ENCODE measurements at regions of chr17 and their contacts with region 1.

Region 1: GRCh38 chr17:4444782-4445473 is 11.2 kb downstream of the SPNS3 start:
- DNase-seq: peak; percentile 79 to 85
- ATAC-seq: peak; percentile 97

Region 2: GRCh38 chr17:4389079-4389478 is 55.8 kb before region 1 on chr17:
- intact Hi-C with region 1: loop called in 1 of 2 experiments (anchors 10 kb)
- DNase-seq: no peak
- ATAC-seq: peak; percentile 71

Region 3: DNA sequence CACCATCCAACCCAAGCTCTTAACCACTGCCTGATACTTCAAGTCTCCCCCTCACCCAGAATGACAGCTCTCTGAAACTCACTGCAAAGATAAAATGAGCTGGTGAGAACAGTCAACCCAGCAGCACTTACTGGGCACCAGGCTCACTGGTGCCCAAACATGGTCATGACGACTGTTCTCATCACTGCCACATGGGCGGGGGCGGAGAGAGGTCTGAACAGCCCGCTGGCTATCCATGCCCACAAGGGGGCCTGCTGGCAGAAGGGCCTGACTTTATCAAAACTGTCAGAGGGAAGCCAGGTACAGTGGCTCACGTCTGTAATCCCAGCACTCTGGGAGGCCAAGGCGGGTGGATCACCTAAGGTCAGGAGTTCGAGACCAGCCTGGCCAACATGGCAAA is 106.2 kb after region 1 on chr17:
- intact Hi-C with region 1: no loop called
- DNase-seq: no peak
- ATAC-seq: no peak

Region 4: GRCh38 chr17:4565209-4566141 is 120.5 kb after region 1 on chr17:
- intact Hi-C with region 1: no loop called
- DNase-seq: peak; percentile 72 to 81
- ATAC-seq: peak; percentile 71

Measured in left colon (tissue), 2 donors.